ENCODE measurements at regions of chr19 and their contacts with region 1.

Region 1: DNA sequence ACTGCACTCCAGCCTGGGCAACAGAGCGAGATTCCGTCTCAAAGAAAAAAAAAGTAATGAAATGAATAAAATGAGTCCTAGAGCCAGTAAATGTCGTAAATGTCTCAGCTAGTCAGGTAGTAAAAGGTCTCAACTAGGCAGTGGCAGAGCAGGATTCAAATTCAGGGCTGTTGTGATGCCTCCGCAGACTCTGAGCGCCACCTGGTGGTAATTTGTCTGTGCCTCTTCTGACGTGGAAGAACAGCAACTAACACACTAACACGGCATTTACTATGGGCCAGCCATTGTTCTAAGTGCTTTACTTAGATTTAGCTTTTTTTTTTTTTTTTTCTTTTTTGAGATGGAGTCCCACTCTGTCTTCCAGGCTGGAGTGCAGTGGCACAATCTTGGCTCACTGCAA is 30.2 kb downstream of the CYP2F1 start:
- DNase-seq: peak; percentile 75
- H3K4me3 Mint-ChIP-seq: no peak overlapping the region
- H3K27ac Mint-ChIP-seq: no peak overlapping the region
- H3K4me1 Mint-ChIP-seq: no peaks in the 10 kb centered on the region
- H3K27me3 Mint-ChIP-seq: peaks cover 9% of the 10 kb centered on the region

Region 2: GRCh38 chr19:40974633-40975037 is 169.8 kb before region 1 on chr19:
- intact Hi-C with region 1: loop called (anchors 2 kb)
- DNase-seq: peak; percentile 58
- H3K4me3 Mint-ChIP-seq: no peak overlapping the region
- H3K27ac Mint-ChIP-seq: no peak overlapping the region
- H3K4me1 Mint-ChIP-seq: peaks cover 32% of the 10 kb centered on the region
- H3K27me3 Mint-ChIP-seq: peaks cover 18% of the 10 kb centered on the region

Region 3: GRCh38 chr19:41000310-41000737 is 144.1 kb before region 1 on chr19:
- intact Hi-C with region 1: no loop called
- DNase-seq: no peak
- H3K4me3 Mint-ChIP-seq: no peak overlapping the region
- H3K27ac Mint-ChIP-seq: no peak overlapping the region
- H3K4me1 Mint-ChIP-seq: no peaks in the 10 kb centered on the region
- H3K27me3 Mint-ChIP-seq: peaks cover 7% of the 10 kb centered on the region

Region 4: GRCh38 chr19:41123716-41124294 is 20.6 kb before region 1 on chr19:
- intact Hi-C with region 1: loop called (anchors 2 kb)
- DNase-seq: no peak
- H3K4me3 Mint-ChIP-seq: no peak overlapping the region
- H3K27ac Mint-ChIP-seq: no peak overlapping the region
- H3K4me1 Mint-ChIP-seq: peaks cover 17% of the 10 kb centered on the region
- H3K27me3 Mint-ChIP-seq: peaks cover 5% of the 10 kb centered on the region

Region 5: DNA sequence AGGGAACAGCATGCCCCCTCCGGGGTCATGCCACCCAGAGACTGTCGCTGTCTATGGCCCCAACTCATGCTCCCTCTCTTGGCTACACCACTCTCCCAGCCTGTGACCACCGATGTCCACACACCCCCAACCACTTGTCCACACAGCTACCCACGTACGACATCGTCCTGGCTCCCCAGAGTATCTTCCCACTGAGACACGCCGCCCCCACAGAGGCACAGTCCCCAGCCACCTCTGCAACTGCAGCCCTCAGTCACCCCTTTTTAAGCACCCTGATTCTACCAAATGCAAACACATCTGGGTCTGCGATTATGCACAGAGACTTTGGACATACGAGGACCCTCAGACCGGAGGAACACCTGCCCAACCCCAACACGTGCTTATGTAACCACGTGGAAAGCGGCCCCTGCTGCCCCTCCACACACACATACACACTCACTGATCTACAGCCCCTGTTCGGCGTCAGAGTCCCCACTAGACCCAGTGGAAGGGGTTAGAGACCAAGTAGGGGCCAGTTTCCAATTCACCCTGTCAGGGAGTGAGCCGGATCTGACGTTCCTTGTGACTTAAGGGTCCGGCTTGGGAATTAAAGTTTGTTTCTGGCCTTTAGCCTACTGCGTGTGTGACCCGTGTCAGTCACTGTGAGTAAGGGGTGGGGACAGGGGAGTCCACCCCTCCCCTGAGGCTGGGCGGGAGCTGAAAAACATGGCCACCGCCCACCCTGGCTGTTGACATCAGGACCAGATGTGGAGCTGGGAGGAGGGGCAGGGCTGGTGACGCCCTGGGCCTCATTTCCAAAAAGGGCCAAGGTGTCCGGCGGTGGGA is 62.7 kb after region 1 on chr19:
- intact Hi-C with region 1: no loop called
- DNase-seq: no peak
- H3K4me3 Mint-ChIP-seq: no peak overlapping the region
- H3K27ac Mint-ChIP-seq: no peak overlapping the region
- H3K4me1 Mint-ChIP-seq: peaks cover 17% of the 10 kb centered on the region
- H3K27me3 Mint-ChIP-seq: peaks cover 2% of the 10 kb centered on the region

Measured in activated T-helper 2 cell treated with anti-CD3 and anti-CD28 coated beads, Interferon-gamma antibody, Interleukin-2, Interleukin-4, amounts not matched to agents 10 μg/mL and 5 μg/mL and 100 μg/mL, durations not matched to agents 14 hours and 24 hours and 36 hours (primary cell).